CD8-positive, alpha-beta T cell (primary cell): ENCODE measurements at regions of chr10 and their contacts with region 1.

Region 1: GRCh38 chr10:99711129-99711719 is 20.7 kb downstream of the COX15 start:
- DNase-seq: peak in 3 of 9 experiments; percentile 25 to 60 (median 49)
- ATAC-seq: peak; percentile 64
- H3K4me3 ChIP-seq: no peak overlapping the region
- H3K4me3 Mint-ChIP-seq: no peak overlapping the region
- H3K27ac ChIP-seq: no peak overlapping the region
- H3K27ac Mint-ChIP-seq: no peak overlapping the region
- H3K4me1 ChIP-seq: no peaks in the 10 kb centered on the region
- H3K4me1 Mint-ChIP-seq: no peaks in the 10 kb centered on the region
- H3K27me3 ChIP-seq: no peaks in the 10 kb centered on the region
- H3K27me3 Mint-ChIP-seq: no peaks in the 10 kb centered on the region
- CTCF ChIP-seq: peak; percentile 41

Region 2: GRCh38 chr10:99435986-99436638 is 275.1 kb before region 1 on chr10:
- CTCF ChIA-PET with region 1: interaction called, 4 read pairs
- POLR2A ChIA-PET with region 1: no interaction called
- intact Hi-C with region 1: loop called (anchors 1 kb)
- DNase-seq: peak in 2 of 9 experiments; percentile 51 to 58
- ATAC-seq: peak; percentile 62
- H3K4me3 ChIP-seq: no peak overlapping the region
- H3K4me3 Mint-ChIP-seq: no peak overlapping the region
- H3K27ac ChIP-seq: no peak overlapping the region
- H3K27ac Mint-ChIP-seq: no peak overlapping the region
- H3K4me1 ChIP-seq: peaks cover 10% of the 10 kb centered on the region
- H3K4me1 Mint-ChIP-seq: peaks cover 25% of the 10 kb centered on the region
- H3K27me3 ChIP-seq: no peaks in the 10 kb centered on the region
- H3K27me3 Mint-ChIP-seq: no peaks in the 10 kb centered on the region
- CTCF ChIP-seq: peak; percentile 80

Region 3: DNA sequence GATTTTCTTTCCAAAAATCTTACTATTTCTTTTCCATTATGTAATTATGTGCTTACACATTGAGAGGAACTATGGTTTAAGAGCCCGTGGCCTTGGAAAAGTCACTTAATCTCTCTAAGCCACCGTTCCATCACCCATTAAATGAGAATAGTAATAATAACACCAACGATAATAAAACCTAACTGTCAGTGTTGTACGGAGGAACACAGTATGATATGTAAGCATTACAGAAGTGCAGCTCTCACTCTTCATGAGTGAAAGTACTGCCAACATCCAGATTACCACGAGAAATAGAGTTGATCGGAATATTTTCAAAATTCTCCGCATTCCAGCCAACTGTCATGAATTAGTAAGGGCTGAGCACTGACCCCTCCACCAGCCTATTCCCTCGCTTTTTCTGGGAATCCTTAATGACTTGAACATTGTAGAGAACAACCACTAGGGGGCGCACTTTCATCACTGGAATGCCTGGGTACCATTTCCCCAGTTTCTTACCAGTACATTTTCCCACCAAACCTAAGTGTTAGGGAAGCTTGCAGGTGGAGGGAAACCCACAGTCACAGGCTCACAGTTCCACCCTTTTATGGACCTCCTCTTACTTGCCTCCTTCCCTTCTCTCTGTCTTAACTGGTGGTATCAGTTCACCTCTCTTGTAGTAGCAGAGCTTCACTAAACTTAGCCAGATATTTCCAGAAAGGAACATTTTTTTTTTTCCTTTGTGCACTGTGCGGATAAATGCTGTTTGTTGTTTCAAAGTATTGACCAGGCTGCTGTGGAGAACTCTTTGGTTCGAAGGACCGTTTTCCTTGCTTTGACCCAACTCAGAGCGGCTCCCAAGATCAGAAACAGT is 150.7 kb before region 1 on chr10:
- CTCF ChIA-PET with region 1: interaction called, 18 read pairs
- POLR2A ChIA-PET with region 1: no interaction called
- intact Hi-C with region 1: loop called in 1 of 2 experiments (anchors 1 kb)
- DNase-seq: peak in 7 of 9 experiments; percentile 7 to 56 (median 45)
- ATAC-seq: no peak
- H3K4me3 ChIP-seq: no peak overlapping the region
- H3K4me3 Mint-ChIP-seq: no peak overlapping the region
- H3K27ac ChIP-seq: no peak overlapping the region
- H3K27ac Mint-ChIP-seq: no peak overlapping the region
- H3K4me1 ChIP-seq: no peaks in the 10 kb centered on the region
- H3K4me1 Mint-ChIP-seq: peaks cover 6% of the 10 kb centered on the region
- H3K27me3 ChIP-seq: no peaks in the 10 kb centered on the region
- H3K27me3 Mint-ChIP-seq: peaks cover 21% of the 10 kb centered on the region
- CTCF ChIP-seq: peak; percentile 74

Region 4: GRCh38 chr10:99698504-99699080 is 12.6 kb before region 1 on chr10:
- CTCF ChIA-PET with region 1: interaction called, 10 read pairs
- POLR2A ChIA-PET with region 1: no interaction called
- intact Hi-C with region 1: no loop called
- DNase-seq: peak in 1 of 9 experiments; percentile 5
- ATAC-seq: no peak
- H3K4me3 ChIP-seq: no peak overlapping the region
- H3K4me3 Mint-ChIP-seq: no peak overlapping the region
- H3K27ac ChIP-seq: no peak overlapping the region
- H3K27ac Mint-ChIP-seq: no peak overlapping the region
- H3K4me1 ChIP-seq: no peaks in the 10 kb centered on the region
- H3K4me1 Mint-ChIP-seq: no peaks in the 10 kb centered on the region
- H3K27me3 ChIP-seq: no peaks in the 10 kb centered on the region
- H3K27me3 Mint-ChIP-seq: no peaks in the 10 kb centered on the region
- CTCF ChIP-seq: no peak